ENCODE measurements at regions of chr17 and their contacts with region 1.

Region 1: DNA sequence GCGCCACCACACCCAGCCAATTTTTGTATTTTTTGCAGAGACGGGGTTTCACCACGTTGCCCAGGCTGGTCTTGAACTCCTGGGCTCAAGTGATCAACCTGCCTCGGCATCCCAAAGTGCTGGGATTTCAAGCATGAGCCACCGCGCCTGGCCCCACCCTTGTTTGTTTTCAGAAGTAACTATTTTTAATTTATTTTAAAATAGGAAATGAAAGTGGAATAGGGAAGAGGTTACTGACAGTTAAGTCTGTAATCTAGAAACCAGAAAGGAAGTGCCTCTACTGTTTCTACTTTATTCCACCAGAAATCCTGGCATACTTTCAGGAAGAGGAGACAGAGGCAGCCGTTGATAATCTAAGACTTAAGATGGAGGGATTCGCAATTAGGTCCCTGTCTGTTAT is 225.6 kb downstream of the TANC2 start:
- DNase-seq: no peak
- ATAC-seq: peak; percentile 64
- H3K4me3 Mint-ChIP-seq: peak overlapping the region; percentile 8
- H3K27ac Mint-ChIP-seq: peak overlapping the region; percentile 80
- H3K4me1 Mint-ChIP-seq: peaks cover 54% of the 10 kb centered on the region
- H3K27me3 Mint-ChIP-seq: no peaks in the 10 kb centered on the region
- CTCF ChIP-seq: no peak

Region 2: DNA sequence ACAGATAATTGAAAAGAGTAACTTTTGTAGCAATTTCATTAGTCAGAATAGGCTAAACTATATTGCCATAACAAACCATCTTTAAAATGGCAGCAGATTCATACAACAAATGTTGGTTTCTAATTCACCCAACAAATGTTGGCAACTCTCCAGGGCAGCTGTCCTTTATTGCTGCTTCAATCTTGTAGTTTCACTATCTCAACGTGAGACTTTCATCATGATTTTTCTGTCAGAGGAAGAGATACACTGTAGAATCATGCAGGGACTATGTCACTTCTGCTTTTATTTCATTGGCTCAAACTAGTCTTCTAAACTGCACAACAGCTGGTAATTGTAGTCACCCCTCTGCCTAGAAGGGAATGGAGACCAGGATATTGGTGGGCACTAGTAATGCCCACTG is 51.4 kb before region 1 on chr17:
- CTCF ChIA-PET with region 1: no interaction called
- POLR2A ChIA-PET with region 1: no interaction called
- intact Hi-C with region 1: loop called (anchors 5 kb)
- DNase-seq: no peak
- ATAC-seq: peak; percentile 68
- H3K4me3 Mint-ChIP-seq: no peak overlapping the region
- H3K27ac Mint-ChIP-seq: peak overlapping the region; percentile 53
- H3K4me1 Mint-ChIP-seq: peaks cover 20% of the 10 kb centered on the region
- H3K27me3 Mint-ChIP-seq: no peaks in the 10 kb centered on the region
- CTCF ChIP-seq: no peak

Measured in activated B cell treated with CpG ODN at 0.5 μM for 24 hours (primary cell).